ENCODE measurements at regions of chr7 and their contacts with region 1.

Region 1: DNA sequence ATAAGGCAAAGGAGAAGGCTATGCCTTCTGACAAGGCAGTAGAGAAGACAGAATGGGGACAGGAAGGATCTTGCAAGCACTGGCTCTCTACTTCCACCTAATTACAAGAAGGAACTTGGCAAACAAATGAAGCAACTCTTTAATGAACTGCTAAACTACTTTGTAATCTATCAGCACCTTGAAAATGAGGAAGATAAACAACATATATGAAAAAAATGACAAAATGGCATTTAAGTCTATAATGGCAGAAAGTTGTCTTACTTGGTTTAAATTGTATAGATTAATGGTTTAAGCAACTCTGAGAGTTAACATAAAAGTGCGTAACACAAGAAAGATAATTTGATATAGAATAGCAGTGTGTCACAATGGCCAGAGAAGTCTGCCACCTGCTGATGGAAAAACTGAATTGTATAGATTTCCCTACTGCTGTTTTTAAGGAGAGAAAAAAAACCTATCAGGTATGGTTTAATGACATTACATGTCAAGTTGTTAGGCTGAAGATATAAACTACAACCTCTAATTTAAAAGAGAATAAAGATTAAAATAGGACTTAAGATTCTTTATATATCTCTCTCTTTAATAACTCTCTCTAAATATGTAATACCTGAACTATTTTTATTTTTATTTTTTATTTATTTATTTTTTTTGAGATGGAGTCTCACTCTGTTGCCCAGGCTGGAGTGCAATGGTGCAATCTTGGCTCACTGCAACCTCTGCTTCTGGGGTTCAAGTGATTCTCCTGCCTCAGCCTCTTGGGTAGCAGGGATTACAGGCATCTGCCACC is 11.8 kb downstream of the NT5C3A start:
- DNase-seq: peak; percentile 35
- H3K4me3 ChIP-seq: no peak overlapping the region
- H3K27ac ChIP-seq: no peak overlapping the region
- H3K4me1 ChIP-seq: peaks cover 8% of the 10 kb centered on the region
- H3K27me3 ChIP-seq: no peaks in the 10 kb centered on the region
- CTCF ChIP-seq: peak; percentile 51 to 70

Region 2: DNA sequence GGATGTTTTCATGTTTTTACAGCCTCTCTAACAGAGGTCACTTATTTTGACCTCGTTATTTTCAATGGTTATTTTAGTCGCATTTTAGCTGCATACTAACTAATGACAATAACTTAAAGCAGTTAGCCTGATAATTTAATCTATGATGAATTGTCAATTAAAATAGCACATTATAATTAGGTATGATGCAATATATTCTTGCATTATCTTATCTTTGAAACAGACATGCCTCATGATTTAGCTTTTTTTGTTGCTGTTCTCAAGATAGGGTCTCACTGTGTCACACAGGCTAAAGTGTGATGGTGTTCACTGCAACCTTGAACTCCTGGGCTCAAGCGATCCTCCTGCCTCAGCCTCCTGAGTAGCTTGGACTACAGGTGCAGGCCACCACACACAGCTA is 285.5 kb before region 1 on chr7:
- CTCF ChIA-PET with region 1: no interaction called
- dilution Hi-C with region 1: no loop called
- in situ Hi-C with region 1: no loop called
- intact Hi-C with region 1: loop called (anchors 2 kb)
- DNase-seq: no peak
- H3K4me3 ChIP-seq: no peak overlapping the region
- H3K27ac ChIP-seq: no peak overlapping the region
- H3K4me1 ChIP-seq: no peaks in the 10 kb centered on the region
- H3K27me3 ChIP-seq: no peaks in the 10 kb centered on the region
- CTCF ChIP-seq: no peak

Region 3: GRCh38 chr7:32803406-32804141 is 247.2 kb before region 1 on chr7:
- CTCF ChIA-PET with region 1: no interaction called
- dilution Hi-C with region 1: no loop called
- in situ Hi-C with region 1: no loop called
- intact Hi-C with region 1: loop called (anchors 1 kb)
- DNase-seq: no peak
- H3K4me3 ChIP-seq: no peak overlapping the region
- H3K27ac ChIP-seq: no peak overlapping the region
- H3K4me1 ChIP-seq: no peaks in the 10 kb centered on the region
- H3K27me3 ChIP-seq: no peaks in the 10 kb centered on the region
- CTCF ChIP-seq: no peak

Region 4: GRCh38 chr7:32846701-32847100 is 204.0 kb before region 1 on chr7:
- CTCF ChIA-PET with region 1: no interaction called
- dilution Hi-C with region 1: no loop called
- in situ Hi-C with region 1: no loop called
- intact Hi-C with region 1: loop called (anchors 1 kb)
- DNase-seq: peak; percentile 51
- H3K4me3 ChIP-seq: no peak overlapping the region
- H3K27ac ChIP-seq: no peak overlapping the region
- H3K4me1 ChIP-seq: no peaks in the 10 kb centered on the region
- H3K27me3 ChIP-seq: no peaks in the 10 kb centered on the region
- CTCF ChIP-seq: peak; percentile 63 to 76

Region 5: DNA sequence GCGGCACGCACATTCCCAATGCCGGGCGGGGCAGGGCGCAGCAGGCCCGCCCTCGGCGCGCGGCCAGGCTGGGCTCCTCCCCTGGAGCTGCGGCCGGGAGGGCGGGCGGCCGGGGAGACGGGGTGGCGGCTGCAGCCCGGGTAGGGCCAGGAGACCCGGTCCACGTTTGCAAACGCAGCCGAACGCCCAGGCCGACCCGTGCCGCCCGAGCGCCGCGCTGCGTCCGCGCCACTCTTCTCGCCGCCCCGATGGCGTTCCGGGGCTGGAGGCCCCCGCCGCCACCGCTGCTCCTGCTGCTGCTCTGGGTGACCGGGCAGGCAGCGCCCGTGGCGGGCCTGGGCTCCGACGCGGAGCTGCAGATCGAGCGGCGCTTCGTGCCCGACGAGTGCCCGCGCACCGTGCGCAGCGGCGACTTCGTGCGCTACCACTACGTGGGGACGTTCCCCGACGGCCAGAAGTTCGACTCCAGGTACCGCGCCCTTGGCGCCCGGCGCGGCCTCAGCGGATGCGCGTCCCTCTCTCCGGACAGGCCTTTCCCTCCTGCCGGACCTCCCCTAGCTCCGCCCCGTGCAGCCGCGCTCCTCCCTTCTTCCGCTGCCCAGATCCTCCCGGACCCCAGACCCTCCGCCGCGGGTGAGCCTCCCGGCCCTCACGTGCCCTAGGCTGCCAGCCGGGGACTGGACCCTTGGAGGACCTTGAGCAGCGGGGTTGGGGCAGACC is 93.2 kb before region 1 on chr7 and contains the start of gene FKBP9:
- CTCF ChIA-PET with region 1: no interaction called
- dilution Hi-C with region 1: no loop called
- in situ Hi-C with region 1: loop called in 1 of 2 experiments (anchors 10 kb)
- intact Hi-C with region 1: no loop called
- DNase-seq: peak; percentile 79
- H3K4me3 ChIP-seq: peak within 1 kb of the TSS; percentile 61 to 74 (median 70)
- H3K27ac ChIP-seq: peak within 1 kb of the TSS; percentile 74
- H3K4me1 ChIP-seq: peaks cover 3% of the 10 kb centered on the region
- H3K27me3 ChIP-seq: no peaks in the 10 kb centered on the region
- CTCF ChIP-seq: no peak
- total RNA-seq, gene FKBP9: 129 to 301 TPM